ENCODE measurements at regions of chr5 and their contacts with region 1.

Region 1: GRCh38 chr5:160439205-160439600 is 17.5 kb downstream of the PTTG1 start:
- DNase-seq: peak; percentile 82 to 87 (median 84)
- H3K4me3 ChIP-seq: peak overlapping the region; percentile 48 to 85
- H3K4me3 Mint-ChIP-seq: peak overlapping the region; percentile 87 to 99 (median 91)
- H3K27ac ChIP-seq: peak overlapping the region; percentile 33
- H3K27ac Mint-ChIP-seq: peak overlapping the region; percentile 84 to 97 (median 89)
- H3K4me1 ChIP-seq: peaks cover 10% of the 10 kb centered on the region
- H3K4me1 Mint-ChIP-seq: peaks cover 7 to 23% (median 12%) of the 10 kb centered on the region in 4 donors
- H3K27me3 ChIP-seq: no peaks in the 10 kb centered on the region
- H3K27me3 Mint-ChIP-seq: peaks cover 7% of the 10 kb centered on the region in 2 donors

Region 2: DNA sequence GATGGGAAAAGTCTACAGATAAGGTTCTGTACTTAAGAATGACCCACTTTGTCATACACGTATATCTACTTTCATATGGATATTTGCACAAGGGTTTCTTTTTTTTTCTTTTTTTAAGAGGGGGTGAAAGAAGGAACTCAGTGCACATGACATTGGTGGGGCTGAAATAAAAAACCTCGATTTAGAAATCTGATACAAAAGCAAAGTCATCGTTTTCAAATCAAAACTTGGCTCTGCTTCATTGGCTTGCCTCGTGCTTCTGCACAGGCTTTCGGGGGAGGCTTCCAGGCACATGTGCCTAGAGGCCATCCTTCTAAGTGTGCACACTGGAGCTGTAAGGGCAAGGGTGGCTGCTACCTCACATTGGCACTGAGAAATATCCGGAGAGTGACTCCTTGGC is 13.6 kb after region 1 on chr5:
- CTCF ChIA-PET with region 1: interaction called, 24 read pairs
- POLR2A ChIA-PET with region 1: no interaction called
- intact Hi-C with region 1: no loop called
- DNase-seq: no peak
- H3K4me3 ChIP-seq: no peak overlapping the region
- H3K4me3 Mint-ChIP-seq: no peak overlapping the region
- H3K27ac ChIP-seq: no peak overlapping the region
- H3K27ac Mint-ChIP-seq: no peak overlapping the region
- H3K4me1 ChIP-seq: no peaks in the 10 kb centered on the region
- H3K4me1 Mint-ChIP-seq: peaks cover 0 to 6% (median 2%) of the 10 kb centered on the region in 4 donors
- H3K27me3 ChIP-seq: no peaks in the 10 kb centered on the region
- H3K27me3 Mint-ChIP-seq: peaks cover 0 to 2% of the 10 kb centered on the region in 2 donors

Region 3: GRCh38 chr5:160467555-160468362 is 28.6 kb after region 1 on chr5:
- CTCF ChIA-PET with region 1: interaction called, 78 read pairs
- POLR2A ChIA-PET with region 1: interaction called, 34 read pairs
- intact Hi-C with region 1: loop called (anchors 1 kb)
- DNase-seq: peak; percentile 70 to 90 (median 77)
- H3K4me3 ChIP-seq: peak overlapping the region; percentile 73 to 75
- H3K4me3 Mint-ChIP-seq: peak overlapping the region; percentile 90 to 99 (median 96)
- H3K27ac ChIP-seq: peak overlapping the region; percentile 70
- H3K27ac Mint-ChIP-seq: peak overlapping the region; percentile 90 to 98 (median 97)
- H3K4me1 ChIP-seq: peaks cover 59% of the 10 kb centered on the region
- H3K4me1 Mint-ChIP-seq: peaks cover 43 to 84% (median 62%) of the 10 kb centered on the region in 4 donors
- H3K27me3 ChIP-seq: no peaks in the 10 kb centered on the region
- H3K27me3 Mint-ChIP-seq: no peaks in the 10 kb centered on the region

Region 4: GRCh38 chr5:160500786-160501779 is 61.9 kb after region 1 on chr5:
- CTCF ChIA-PET with region 1: interaction called, 192 read pairs
- POLR2A ChIA-PET with region 1: interaction called, 14 read pairs
- intact Hi-C with region 1: no loop called
- DNase-seq: no peak
- H3K4me3 ChIP-seq: no peak overlapping the region
- H3K4me3 Mint-ChIP-seq: no peak overlapping the region
- H3K27ac ChIP-seq: no peak overlapping the region
- H3K27ac Mint-ChIP-seq: no peak overlapping the region
- H3K4me1 ChIP-seq: peaks cover 6% of the 10 kb centered on the region
- H3K4me1 Mint-ChIP-seq: peaks cover 6 to 7% (median 7%) of the 10 kb centered on the region in 4 donors
- H3K27me3 ChIP-seq: no peaks in the 10 kb centered on the region
- H3K27me3 Mint-ChIP-seq: no peaks in the 10 kb centered on the region

Region 5: DNA sequence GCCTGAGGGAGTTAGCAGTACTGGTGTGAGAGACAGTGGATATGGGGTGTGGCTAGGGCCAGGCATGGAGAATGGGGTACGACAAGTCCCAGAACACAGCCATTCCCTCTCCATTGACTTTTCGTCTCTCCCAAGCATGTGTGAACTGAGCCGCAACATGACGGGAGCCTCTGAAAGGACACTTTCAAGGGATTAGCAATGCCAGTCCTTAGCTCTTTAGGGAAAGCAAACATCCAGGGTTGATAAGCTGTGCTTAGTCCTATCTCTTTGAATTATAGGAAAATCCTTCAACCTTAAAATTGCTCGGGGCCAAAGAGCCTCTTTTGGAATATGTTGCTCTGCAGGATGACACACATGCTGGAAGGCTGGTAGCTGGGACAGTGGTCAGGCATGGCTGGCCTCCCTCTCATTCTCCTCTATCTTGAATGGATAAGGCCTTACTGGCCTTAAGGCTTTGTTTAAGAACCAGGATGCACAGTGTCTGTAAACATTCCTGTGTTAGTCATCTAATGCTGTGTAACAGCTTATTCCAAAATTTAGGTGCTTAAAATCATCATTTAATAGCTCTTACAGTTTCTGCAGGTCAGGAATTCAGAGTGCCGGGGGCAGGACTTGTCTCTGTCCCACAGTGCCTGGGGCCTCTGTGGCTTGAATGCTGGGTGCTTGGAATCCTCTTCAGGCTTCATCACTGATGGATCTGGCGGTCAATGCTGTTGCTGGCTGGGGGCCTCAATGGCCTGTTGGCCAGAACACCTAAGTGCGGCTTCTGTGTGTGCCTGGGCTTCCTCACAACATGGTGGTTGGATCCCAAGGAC is 77.7 kb after region 1 on chr5:
- CTCF ChIA-PET with region 1: interaction called, 192 read pairs
- POLR2A ChIA-PET with region 1: no interaction called
- intact Hi-C with region 1: no loop called
- DNase-seq: no peak
- H3K4me3 ChIP-seq: no peak overlapping the region
- H3K4me3 Mint-ChIP-seq: no peak overlapping the region
- H3K27ac ChIP-seq: no peak overlapping the region
- H3K27ac Mint-ChIP-seq: no peak overlapping the region
- H3K4me1 ChIP-seq: no peaks in the 10 kb centered on the region
- H3K4me1 Mint-ChIP-seq: no peaks in the 10 kb centered on the region
- H3K27me3 ChIP-seq: no peaks in the 10 kb centered on the region
- H3K27me3 Mint-ChIP-seq: no peaks in the 10 kb centered on the region

Region 6: GRCh38 chr5:160787240-160787639 is 348.0 kb after region 1 on chr5:
- CTCF ChIA-PET with region 1: interaction called, 13 read pairs
- POLR2A ChIA-PET with region 1: no interaction called
- intact Hi-C with region 1: no loop called
- DNase-seq: peak in 2 of 5 donors; percentile 1 to 37
- H3K4me3 ChIP-seq: no peak overlapping the region
- H3K4me3 Mint-ChIP-seq: no peak overlapping the region
- H3K27ac ChIP-seq: no peak overlapping the region
- H3K27ac Mint-ChIP-seq: no peak overlapping the region
- H3K4me1 ChIP-seq: no peaks in the 10 kb centered on the region
- H3K4me1 Mint-ChIP-seq: no peaks in the 10 kb centered on the region
- H3K27me3 ChIP-seq: no peaks in the 10 kb centered on the region
- H3K27me3 Mint-ChIP-seq: peaks cover 1 to 2% of the 10 kb centered on the region in 2 donors

Region 7: DNA sequence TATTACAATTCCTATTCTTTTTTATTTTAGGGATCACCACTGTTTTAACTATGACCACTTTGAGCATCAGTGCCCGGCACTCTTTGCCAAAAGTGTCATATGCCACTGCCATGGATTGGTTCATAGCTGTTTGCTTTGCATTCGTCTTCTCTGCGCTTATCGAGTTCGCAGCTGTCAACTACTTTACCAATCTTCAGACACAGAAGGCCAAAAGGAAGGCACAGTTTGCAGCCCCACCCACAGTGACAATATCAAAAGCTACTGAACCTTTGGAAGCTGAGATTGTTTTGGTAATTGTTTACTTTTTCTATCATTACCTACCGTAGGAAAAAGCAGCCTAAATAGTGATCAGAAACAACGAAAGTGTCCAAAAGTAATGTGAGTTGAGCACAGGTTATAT is 1252.7 kb after region 1 on chr5:
- CTCF ChIA-PET with region 1: no interaction called
- POLR2A ChIA-PET with region 1: no interaction called
- intact Hi-C with region 1: loop called (anchors 5 kb)
- DNase-seq: no peak
- H3K4me3 ChIP-seq: no peak overlapping the region
- H3K4me3 Mint-ChIP-seq: no peak overlapping the region
- H3K27ac ChIP-seq: no peak overlapping the region
- H3K27ac Mint-ChIP-seq: no peak overlapping the region
- H3K4me1 ChIP-seq: no peaks in the 10 kb centered on the region
- H3K4me1 Mint-ChIP-seq: no peaks in the 10 kb centered on the region
- H3K27me3 ChIP-seq: no peaks in the 10 kb centered on the region
- H3K27me3 Mint-ChIP-seq: no peaks in the 10 kb centered on the region

Measured in CD4-positive, alpha-beta memory T cell (primary cell).